Tibial artery (tissue), 4 donors: ENCODE measurements at regions of chr16 and their contacts with region 1.

Region 1: DNA sequence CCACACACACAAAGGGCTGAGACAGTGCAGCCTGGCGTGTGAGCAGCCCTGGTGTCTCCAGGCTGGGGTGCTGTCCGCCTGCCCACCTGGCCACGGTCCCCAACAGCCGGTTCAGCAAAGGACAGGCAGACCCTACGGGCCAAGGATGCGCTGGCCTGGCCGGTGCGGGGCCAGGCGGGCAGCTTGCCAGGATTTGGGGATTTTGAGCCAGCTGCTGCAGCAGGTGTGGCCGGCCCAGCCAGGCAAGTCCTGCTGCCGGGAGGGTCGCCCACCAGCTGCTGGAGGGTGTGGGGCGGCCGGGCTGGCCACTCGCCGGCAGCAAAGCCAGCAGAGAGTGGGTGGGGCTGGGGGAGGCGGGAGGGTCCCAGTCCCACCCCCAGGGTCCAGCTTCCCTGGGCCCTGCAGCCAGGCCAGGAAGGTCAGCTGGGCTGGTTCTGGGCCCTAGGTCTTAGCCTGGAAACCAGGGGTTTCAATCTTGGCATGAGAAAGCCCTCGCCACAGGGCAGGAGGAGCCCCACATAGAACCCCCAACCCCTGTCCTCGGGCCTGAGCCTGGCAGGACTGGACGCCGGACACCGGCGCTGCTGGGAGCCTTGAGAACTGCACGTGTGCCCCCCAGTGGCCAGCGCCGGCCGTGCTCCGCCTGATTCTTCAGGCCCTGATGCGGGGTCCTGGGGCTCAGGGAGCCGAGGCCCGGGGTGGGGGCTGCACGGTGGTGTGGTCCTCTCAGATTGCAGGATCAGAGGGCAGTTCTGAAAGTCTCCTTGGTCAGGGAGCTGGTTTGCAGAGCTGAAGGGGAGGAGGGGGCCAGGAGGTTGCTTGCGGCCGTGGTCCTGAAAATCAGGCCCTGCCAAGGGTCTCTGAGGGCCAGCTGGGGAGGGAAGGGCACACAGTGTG is 17.6 kb upstream of the SSTR5 start:
- DNase-seq: no peak
- H3K4me3 ChIP-seq: no peak overlapping the region
- H3K27ac ChIP-seq: no peak overlapping the region
- H3K4me1 ChIP-seq: peaks cover 0 to 14% (median 10%) of the 10 kb centered on the region in 4 donors
- H3K27me3 ChIP-seq: peaks cover 0 to 80% of the 10 kb centered on the region in 2 donors
- CTCF ChIP-seq: peak; percentile 73 to 75

Region 2: GRCh38 chr16:600781-601180 is 454.1 kb before region 1 on chr16:
- intact Hi-C with region 1: no loop called
- DNase-seq: no peak
- H3K4me3 ChIP-seq: no peak overlapping the region
- H3K27ac ChIP-seq: no peak overlapping the region
- H3K4me1 ChIP-seq: peaks cover 0 to 5% (median 0%) of the 10 kb centered on the region in 4 donors
- H3K27me3 ChIP-seq: no peaks in the 10 kb centered on the region
- CTCF ChIP-seq: no peak

Region 3: DNA sequence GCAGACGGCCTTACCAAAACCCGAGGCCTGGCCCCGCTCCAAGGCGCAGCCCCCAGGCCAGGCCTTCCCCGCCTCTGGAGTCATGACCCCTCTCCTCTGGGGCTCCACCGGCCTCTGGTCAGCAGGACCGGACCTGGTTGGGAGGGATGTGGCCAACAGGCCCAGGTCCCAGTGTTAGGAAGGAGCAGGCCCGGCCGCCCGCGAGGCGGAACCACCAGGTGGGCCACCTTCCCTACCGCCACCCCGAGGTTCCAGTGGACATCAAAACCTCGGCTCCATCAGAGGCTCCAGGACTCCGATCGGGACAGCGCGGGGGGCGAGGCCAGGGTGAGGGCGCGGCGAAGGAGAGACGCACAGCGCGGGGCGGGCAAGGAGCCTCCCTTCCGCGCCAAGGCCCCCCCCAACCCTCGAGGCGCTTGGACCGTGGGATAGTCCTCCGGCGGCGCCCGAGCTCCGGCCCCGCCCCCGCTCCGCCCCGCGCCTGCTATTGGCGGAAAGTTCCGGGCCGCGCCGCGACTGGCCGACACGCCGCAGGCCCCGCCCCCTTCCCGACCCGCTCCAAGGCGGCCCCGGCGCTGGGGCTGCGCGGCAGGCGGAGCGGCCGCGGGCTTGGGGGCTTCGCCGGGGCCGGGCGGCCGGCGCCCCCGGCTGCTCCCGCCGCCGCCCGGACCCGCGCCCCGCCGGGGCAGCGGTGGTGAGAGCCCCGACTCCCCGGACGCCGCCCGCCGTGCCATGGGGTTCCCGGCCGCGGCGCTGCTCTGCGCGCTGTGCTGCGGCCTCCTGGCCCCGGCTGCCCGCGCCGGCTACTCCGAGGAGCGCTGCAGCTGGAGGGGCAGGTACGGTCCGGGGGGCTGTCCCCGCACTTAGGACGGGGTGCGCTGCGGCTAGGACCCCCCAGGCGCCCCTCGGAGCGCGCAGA is 340.1 kb before region 1 on chr16 and contains the start of gene METRN:
- intact Hi-C with region 1: loop called (anchors 5 kb)
- DNase-seq: peak; percentile 90 to 94
- H3K4me3 ChIP-seq: peak within 1 kb of the TSS; percentile 56 to 75
- H3K27ac ChIP-seq: no peak within 1 kb of the TSS
- H3K4me1 ChIP-seq: peaks cover 0 to 44% (median 27%) of the 10 kb centered on the region in 4 donors
- H3K27me3 ChIP-seq: peaks cover 0 to 44% of the 10 kb centered on the region in 2 donors
- CTCF ChIP-seq: no peak

Region 4: DNA sequence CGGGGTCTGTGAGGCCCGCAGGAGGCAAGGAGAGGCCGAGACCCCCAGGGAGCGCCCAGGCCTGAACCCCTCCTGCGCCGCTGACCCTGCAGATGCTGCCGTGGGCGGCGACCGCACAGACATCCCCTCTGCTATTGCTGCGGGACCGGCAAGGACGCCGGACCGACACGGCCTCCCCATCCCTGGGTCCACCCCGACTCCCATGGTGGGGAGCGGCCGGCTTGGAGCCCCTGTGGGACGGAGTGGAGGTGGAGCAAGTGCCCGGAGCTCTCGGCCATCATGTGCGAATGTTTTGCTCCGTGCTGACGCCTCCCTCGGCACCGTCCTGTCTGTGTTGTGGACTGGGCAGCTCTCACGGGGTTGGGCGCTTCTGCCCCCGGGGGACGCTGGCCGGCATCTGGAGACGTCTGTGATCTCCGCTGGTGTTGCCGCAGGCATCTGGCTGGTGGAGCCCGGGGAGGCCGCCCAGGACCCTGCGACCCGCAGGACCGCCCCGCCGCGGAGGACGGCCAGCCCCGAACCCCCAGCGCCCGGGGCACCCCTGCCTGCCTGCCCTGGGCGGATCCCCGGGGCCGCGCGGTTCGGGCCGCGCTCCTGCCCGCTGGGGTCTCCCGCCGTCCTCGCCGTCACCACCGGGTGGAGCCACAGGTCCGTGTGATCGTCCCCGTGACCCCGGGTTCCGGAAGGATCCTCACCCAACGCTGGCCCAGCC is 241.5 kb before region 1 on chr16:
- intact Hi-C with region 1: loop called (anchors 10 kb)
- DNase-seq: no peak
- H3K4me3 ChIP-seq: no peak overlapping the region
- H3K27ac ChIP-seq: no peak overlapping the region
- H3K4me1 ChIP-seq: peaks cover 0 to 20% (median 2%) of the 10 kb centered on the region in 4 donors
- H3K27me3 ChIP-seq: peaks cover 0 to 76% of the 10 kb centered on the region in 2 donors
- CTCF ChIP-seq: peak; percentile 20 to 22

Region 5: DNA sequence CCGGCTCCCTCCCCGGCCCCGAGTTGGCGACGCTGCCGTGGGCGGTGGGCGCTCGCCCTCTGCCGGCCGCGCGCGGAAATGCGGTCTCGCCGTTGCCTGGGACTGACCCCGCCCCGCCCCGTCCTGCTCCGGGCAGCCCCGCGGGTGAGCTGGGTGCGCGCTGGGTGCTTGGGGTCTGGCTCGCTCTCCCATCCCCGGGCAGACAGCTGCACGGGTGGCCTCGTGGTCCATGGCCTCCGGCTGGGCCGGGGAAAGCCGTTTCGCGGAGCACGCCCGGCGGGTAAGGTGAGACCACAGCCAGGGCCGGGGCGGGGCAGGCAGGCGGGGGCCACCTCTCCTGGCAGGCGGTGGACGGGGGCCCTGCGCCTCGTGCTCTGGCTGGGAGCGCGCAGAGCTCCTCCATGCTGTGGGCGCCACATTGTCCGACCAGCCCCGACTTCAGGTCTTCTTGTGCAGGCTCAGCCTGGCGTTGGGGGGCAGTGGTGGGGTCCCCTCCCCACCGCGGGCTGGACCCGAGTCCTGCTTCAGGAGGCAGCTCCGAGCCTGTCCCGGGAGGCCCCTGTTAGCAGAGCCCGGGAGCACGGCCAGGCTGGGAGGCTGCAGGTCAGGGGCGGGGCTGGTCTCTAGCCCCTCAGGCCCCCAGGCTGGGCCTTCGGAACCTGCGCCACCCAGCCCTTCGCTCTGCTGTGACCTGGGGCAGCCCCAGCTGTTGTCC is 48.2 kb after region 1 on chr16:
- intact Hi-C with region 1: loop called (anchors 2 kb)
- DNase-seq: no peak
- H3K4me3 ChIP-seq: peak overlapping the region in 1 of 2 donors; percentile 20
- H3K27ac ChIP-seq: no peak overlapping the region
- H3K4me1 ChIP-seq: peaks cover 0 to 47% (median 28%) of the 10 kb centered on the region in 4 donors
- H3K27me3 ChIP-seq: peaks cover 0 to 59% of the 10 kb centered on the region in 2 donors
- CTCF ChIP-seq: peak; percentile 70 to 77

Region 6: GRCh38 chr16:1180549-1181403 is 125.9 kb after region 1 on chr16:
- intact Hi-C with region 1: no loop called
- DNase-seq: peak; percentile 58 to 96
- H3K4me3 ChIP-seq: peak overlapping the region; percentile 36
- H3K27ac ChIP-seq: peak overlapping the region; percentile 83 to 94
- H3K4me1 ChIP-seq: peaks cover 0 to 81% (median 49%) of the 10 kb centered on the region in 4 donors
- H3K27me3 ChIP-seq: no peaks in the 10 kb centered on the region
- CTCF ChIP-seq: no peak

Region 7: DNA sequence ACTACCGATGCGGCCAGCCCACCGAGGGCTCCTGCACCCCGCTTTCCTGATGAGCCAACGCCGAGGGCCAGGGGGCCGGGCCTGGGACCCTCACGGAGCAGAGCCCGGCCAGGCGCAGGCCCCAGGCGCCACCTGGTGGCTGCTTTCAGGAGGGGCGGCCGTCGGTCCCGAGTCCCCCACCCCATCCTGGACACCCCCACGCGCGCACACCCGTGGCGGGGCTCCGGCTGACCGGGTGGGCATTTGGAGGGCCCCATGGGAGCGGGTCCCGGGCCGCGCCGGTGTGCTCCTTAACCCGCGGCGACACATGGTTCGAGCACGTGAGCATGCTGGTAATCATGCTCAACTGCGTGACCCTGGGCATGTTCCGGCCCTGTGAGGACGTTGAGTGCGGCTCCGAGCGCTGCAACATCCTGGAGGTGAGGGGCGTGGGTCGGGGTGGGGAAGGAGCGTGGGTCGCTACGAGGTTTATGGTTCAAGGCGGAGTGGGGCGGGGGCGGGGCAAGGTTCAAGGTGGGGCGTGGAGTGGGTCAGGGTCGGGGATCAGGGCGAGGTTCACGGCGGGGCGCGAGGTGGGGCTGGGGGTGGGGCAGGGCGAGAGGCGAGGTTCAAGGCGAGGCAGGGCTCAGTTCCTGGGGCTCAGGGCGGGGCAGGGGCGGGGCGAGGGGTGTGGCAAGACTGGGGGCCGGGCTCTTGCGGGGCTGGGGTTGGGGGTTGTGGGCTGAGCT is 139.9 kb after region 1 on chr16:
- intact Hi-C with region 1: loop called (anchors 5 kb)
- DNase-seq: no peak
- H3K4me3 ChIP-seq: no peak overlapping the region
- H3K27ac ChIP-seq: peak overlapping the region in 1 of 2 donors; percentile 18
- H3K4me1 ChIP-seq: peaks cover 0 to 39% (median 29%) of the 10 kb centered on the region in 4 donors
- H3K27me3 ChIP-seq: no peaks in the 10 kb centered on the region
- CTCF ChIP-seq: peak; percentile 83 to 86